Caco-2 (cell line): ENCODE measurements at regions of chr17 and their contacts with region 1.

Region 1: DNA sequence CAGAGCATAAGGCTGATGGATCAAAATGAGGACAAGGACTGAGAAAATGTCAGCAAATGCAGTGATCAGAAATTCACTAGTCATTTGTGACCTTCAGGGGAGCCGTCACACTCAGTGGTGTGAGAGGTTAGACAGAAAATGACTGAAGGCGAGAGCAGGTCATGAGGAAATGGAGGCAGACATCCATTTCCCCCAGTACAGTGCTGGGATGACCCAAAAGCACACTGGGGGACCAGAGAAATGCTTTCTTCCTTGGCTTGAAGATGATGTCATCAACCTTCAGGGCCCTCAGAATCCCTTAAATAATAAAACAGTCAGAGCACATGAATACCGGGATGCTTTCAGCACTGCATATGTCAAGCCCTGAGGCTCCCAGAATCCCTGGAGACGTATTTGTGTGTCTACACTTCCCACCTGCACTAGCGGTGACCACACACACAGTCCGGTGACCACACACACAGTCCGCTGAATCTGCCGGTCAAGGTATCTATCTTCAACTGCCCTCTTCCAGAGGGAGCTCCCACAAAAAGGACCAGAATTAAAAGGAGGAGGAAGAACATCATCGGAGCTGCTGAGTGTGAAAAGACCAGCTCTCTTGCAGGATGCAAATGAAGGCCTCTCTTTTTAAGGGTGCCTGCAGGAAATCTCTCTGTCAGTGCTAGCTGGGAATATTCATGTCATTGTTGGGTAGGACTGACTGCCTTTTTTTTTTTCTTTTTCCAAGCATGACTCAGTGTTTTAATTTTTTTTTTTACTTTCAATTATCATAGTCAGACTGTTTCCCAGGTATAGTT is 8.2 kb downstream of the UBE2O start:
- DNase-seq: no peak
- H3K4me3 ChIP-seq: no peak overlapping the region
- H3K4me3 Mint-ChIP-seq: no peak overlapping the region
- H3K27ac Mint-ChIP-seq: peak overlapping the region; percentile 32
- H3K4me1 ChIP-seq: peaks cover 32% of the 10 kb centered on the region
- H3K4me1 Mint-ChIP-seq: peaks cover 40% of the 10 kb centered on the region
- H3K27me3 ChIP-seq: no peaks in the 10 kb centered on the region
- H3K27me3 Mint-ChIP-seq: no peaks in the 10 kb centered on the region
- CTCF ChIP-seq: no peak

Region 2: DNA sequence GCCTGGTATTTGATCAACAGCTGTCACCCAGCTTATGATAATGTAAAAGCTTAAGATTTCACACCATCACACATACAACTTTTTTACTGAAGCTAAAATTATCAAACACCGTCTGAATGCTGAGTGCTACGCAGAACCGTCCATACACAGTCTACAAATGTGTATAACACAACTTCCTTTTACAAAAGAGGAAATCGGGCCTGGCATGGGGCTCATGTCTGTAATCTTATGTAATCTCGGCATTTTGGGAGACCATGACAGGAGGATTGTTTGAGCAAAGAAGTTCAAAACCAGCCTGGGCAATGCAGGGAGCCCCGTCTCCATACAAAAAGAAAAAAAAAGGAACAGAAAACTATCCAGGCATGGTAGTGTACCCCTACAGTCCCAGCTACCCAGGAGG is 117.0 kb before region 1 on chr17:
- CTCF ChIA-PET with region 1: no interaction called
- POLR2A ChIA-PET with region 1: no interaction called
- intact Hi-C with region 1: loop called (anchors 5 kb)
- DNase-seq: no peak
- H3K4me3 ChIP-seq: no peak overlapping the region
- H3K4me3 Mint-ChIP-seq: no peak overlapping the region
- H3K27ac Mint-ChIP-seq: no peak overlapping the region
- H3K4me1 ChIP-seq: peaks cover 17% of the 10 kb centered on the region
- H3K4me1 Mint-ChIP-seq: peaks cover 18% of the 10 kb centered on the region
- H3K27me3 ChIP-seq: no peaks in the 10 kb centered on the region
- H3K27me3 Mint-ChIP-seq: no peaks in the 10 kb centered on the region
- CTCF ChIP-seq: no peak